CD8-positive, alpha-beta T cell (primary cell): ENCODE measurements at regions of chr11 and their contacts with region 1.

Region 1: GRCh38 chr11:82250053-82250452 is 483.6 kb downstream of the FAM181B start:
- DNase-seq: no peak
- ATAC-seq: no peak
- H3K4me3 ChIP-seq: no peak overlapping the region
- H3K4me3 Mint-ChIP-seq: no peak overlapping the region
- H3K27ac ChIP-seq: no peak overlapping the region
- H3K27ac Mint-ChIP-seq: no peak overlapping the region
- H3K4me1 ChIP-seq: no peaks in the 10 kb centered on the region
- H3K4me1 Mint-ChIP-seq: no peaks in the 10 kb centered on the region
- H3K27me3 ChIP-seq: no peaks in the 10 kb centered on the region
- H3K27me3 Mint-ChIP-seq: peaks cover 2% of the 10 kb centered on the region
- CTCF ChIP-seq: no peak

Region 2: DNA sequence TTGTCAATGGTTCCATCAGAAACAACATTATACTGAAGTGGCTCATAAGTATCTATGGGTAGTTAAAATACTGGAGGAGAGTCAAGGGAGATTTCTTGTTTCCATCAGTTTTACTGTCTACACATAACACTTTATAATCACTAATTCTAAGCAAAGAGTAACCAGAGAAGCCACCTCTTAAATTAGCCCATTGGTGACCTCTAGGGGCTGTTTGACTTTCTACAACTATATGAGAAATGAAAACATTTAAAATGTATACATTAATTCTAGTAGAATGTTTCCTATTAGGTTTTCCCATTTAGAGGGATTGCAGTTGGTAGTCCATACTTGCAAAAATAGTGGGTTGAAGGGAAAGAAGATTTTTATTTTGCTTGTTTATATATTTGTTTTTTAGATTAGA is 20.7 kb before region 1 on chr11:
- CTCF ChIA-PET with region 1: no interaction called
- POLR2A ChIA-PET with region 1: no interaction called
- intact Hi-C with region 1: loop called in 1 of 2 experiments (anchors 1 kb)
- DNase-seq: peak in 2 of 9 experiments; percentile 24 to 42
- ATAC-seq: no peak
- H3K4me3 ChIP-seq: no peak overlapping the region
- H3K4me3 Mint-ChIP-seq: no peak overlapping the region
- H3K27ac ChIP-seq: no peak overlapping the region
- H3K27ac Mint-ChIP-seq: no peak overlapping the region
- H3K4me1 ChIP-seq: no peaks in the 10 kb centered on the region
- H3K4me1 Mint-ChIP-seq: no peaks in the 10 kb centered on the region
- H3K27me3 ChIP-seq: no peaks in the 10 kb centered on the region
- H3K27me3 Mint-ChIP-seq: peaks cover 3% of the 10 kb centered on the region
- CTCF ChIP-seq: no peak

Region 3: GRCh38 chr11:82303671-82304070 is 53.6 kb after region 1 on chr11:
- CTCF ChIA-PET with region 1: no interaction called
- POLR2A ChIA-PET with region 1: no interaction called
- intact Hi-C with region 1: no loop called
- DNase-seq: no peak
- ATAC-seq: no peak
- H3K4me3 ChIP-seq: no peak overlapping the region
- H3K4me3 Mint-ChIP-seq: no peak overlapping the region
- H3K27ac ChIP-seq: no peak overlapping the region
- H3K27ac Mint-ChIP-seq: no peak overlapping the region
- H3K4me1 ChIP-seq: no peaks in the 10 kb centered on the region
- H3K4me1 Mint-ChIP-seq: no peaks in the 10 kb centered on the region
- H3K27me3 ChIP-seq: no peaks in the 10 kb centered on the region
- H3K27me3 Mint-ChIP-seq: no peaks in the 10 kb centered on the region
- CTCF ChIP-seq: no peak